Activated CD4-positive, alpha-beta T cell treated with anti-CD3 and anti-CD28 coated beads, Interleukin-2, amount 10 ng/mL, durations not matched to agents 7 days and 5 days (primary cell): ENCODE measurements at regions of chrX and their contacts with region 1.

Region 1: DNA sequence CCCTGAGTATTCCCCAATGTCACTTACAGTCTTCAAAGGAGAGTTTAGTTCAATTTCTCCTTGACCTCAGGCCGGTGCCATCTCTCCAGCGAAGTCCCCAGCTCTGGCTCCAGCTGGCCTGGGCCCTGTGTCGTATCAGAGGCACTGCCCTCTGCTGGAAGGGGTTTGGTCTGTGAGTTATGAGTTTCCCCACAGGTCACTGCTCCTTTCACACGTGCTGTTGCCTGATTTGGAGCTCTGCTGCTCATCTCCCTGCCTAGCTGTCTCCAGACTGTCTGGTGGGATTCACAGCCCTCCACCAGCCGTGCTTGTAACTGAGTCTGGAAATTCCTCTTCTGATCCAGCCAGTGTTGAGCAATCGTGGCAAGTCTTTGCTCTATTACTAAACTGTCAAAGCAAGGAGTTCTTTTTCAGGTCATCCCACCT is at the start of gene RAP2C:
- DNase-seq: peak; percentile 66
- H3K4me3 Mint-ChIP-seq: peak within 1 kb of the TSS; percentile 84
- H3K27ac Mint-ChIP-seq: peak within 1 kb of the TSS; percentile 92
- H3K4me1 Mint-ChIP-seq: peaks cover 21% of the 10 kb centered on the region
- H3K27me3 Mint-ChIP-seq: no peaks in the 10 kb centered on the region
- total RNA-seq, gene RAP2C: 27.0 to 28.1 TPM

Region 2: DNA sequence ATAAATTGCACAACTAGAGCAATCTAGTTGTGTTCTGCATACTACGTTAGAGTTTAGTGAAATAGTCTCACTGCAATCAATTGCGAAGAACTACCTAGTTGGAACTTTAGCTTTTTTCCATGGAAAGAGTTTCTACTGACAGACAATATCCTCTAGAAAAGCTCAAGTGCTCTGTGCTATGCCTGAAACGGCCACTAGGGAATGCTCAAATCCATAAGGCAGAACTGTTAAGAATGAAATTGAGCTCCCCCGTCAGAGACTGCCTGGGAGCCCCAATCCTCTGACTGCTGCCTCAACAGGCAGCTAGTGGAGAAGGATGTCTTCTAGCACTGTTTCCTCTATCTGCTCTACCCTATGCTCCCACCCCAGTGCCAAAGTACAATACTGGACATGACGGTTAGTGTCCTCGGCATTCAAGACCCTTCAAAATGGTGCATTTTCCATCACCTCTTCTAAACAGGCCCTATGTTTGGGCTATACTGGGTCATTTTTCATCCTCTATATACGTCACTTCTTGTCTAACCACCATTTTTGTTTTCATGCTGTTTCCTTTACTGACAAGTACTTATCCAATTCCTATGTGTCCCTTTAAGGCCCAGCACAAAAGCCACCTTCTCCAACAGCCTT is 126.8 kb before region 1 on chrX:
- CTCF ChIA-PET with region 1: interaction called, 12 read pairs
- POLR2A ChIA-PET with region 1: no interaction called
- DNase-seq: peak; percentile 47
- H3K4me3 Mint-ChIP-seq: no peak overlapping the region
- H3K27ac Mint-ChIP-seq: no peak overlapping the region
- H3K4me1 Mint-ChIP-seq: peaks cover 12% of the 10 kb centered on the region
- H3K27me3 Mint-ChIP-seq: peaks cover 3% of the 10 kb centered on the region